HCT116 (cell line): ENCODE measurements at regions of chr4 and their contacts with region 1.

Region 1: GRCh38 chr4:185134307-185134869 is 8.7 kb upstream of the SLC25A4 start:
- DNase-seq: peak; percentile 59
- ATAC-seq: peak; percentile 85
- H3K4me3 ChIP-seq: no peak overlapping the region
- H3K27ac ChIP-seq: no peak overlapping the region
- H3K4me1 ChIP-seq: peaks cover 2 to 5% of the 10 kb centered on the region in 2 experiments; a peak in 1 of 4 replicates
- H3K27me3 ChIP-seq: no peaks in the 10 kb centered on the region
- CTCF ChIP-seq: peak; percentile 57 to 92 (median 89); a peak in 5 of 6 replicates
- POLR2A ChIP-seq: no peak
- RAD21 ChIP-seq: peak; percentile 96

Region 2: GRCh38 chr4:184745831-184746795 is 388.3 kb before region 1 on chr4:
- CTCF ChIA-PET with region 1: interaction called, 4 read pairs
- POLR2A ChIA-PET with region 1: no interaction called
- RAD21 ChIA-PET with region 1: no interaction called
- intact Hi-C with region 1: loop called (anchors 5 kb)
- DNase-seq: peak; percentile 29
- ATAC-seq: peak; percentile 79
- H3K4me3 ChIP-seq: no peak overlapping the region
- H3K27ac ChIP-seq: no peak overlapping the region
- H3K4me1 ChIP-seq: peaks cover 0 to 9% of the 10 kb centered on the region in 2 experiments; a peak in 1 of 4 replicates
- H3K27me3 ChIP-seq: no peaks in the 10 kb centered on the region
- CTCF ChIP-seq: peak; percentile 57 to 66 (median 57)
- POLR2A ChIP-seq: no peak
- RAD21 ChIP-seq: peak; percentile 80

Region 3: GRCh38 chr4:184825896-184826690 is 308.3 kb before region 1 on chr4 and contains the start of gene ACSL1:
- CTCF ChIA-PET with region 1: no interaction called
- POLR2A ChIA-PET with region 1: no interaction called
- RAD21 ChIA-PET with region 1: no interaction called
- intact Hi-C with region 1: loop called (anchors 5 kb)
- DNase-seq: no peak
- ATAC-seq: peak; percentile 91
- H3K4me3 ChIP-seq: peak within 1 kb of the TSS; percentile 45 to 67
- H3K27ac ChIP-seq: peak within 1 kb of the TSS; percentile 19; the same call in 1 of the 2 replicates
- H3K4me1 ChIP-seq: peaks cover 6 to 17% of the 10 kb centered on the region in 2 experiments
- H3K27me3 ChIP-seq: no peaks in the 10 kb centered on the region
- CTCF ChIP-seq: no peak
- POLR2A ChIP-seq: peak; percentile 44
- RAD21 ChIP-seq: no peak
- total RNA-seq, gene ACSL1: 12.5 TPM

Region 4: DNA sequence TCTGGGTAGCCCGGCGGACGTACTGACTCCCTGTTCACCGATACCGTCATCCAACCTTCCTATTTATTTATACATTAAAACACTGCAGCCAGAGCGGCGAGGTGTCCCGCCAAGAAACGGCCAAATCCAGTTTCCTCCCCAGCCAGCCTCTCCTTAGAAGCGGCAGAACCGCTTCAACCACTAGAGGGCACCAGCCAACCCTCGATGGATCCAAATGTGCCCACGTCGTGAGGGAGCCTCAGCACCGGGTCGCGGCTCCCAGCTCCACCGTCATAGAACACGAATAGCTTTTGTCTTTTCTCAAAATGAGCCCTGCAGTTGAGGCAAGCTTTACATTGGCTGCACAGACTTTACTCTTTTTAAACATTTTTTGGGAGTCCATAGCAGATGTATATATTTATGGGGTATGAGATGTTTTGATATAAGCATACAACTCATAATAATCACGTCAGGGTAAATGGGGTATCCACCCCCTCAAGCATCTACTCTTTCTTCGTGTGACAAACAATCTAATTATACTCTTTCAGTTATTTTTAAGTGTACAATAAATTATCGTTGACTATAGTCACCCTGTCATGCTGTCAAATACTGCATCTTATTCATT is 129.1 kb before region 1 on chr4:
- CTCF ChIA-PET with region 1: interaction called, 17 read pairs
- POLR2A ChIA-PET with region 1: no interaction called
- RAD21 ChIA-PET with region 1: interaction called, 4 to 5 read pairs
- intact Hi-C with region 1: loop called (anchors 1 kb)
- DNase-seq: peak; percentile 72
- ATAC-seq: peak; percentile 97
- H3K4me3 ChIP-seq: peak overlapping the region; percentile 13 to 38
- H3K27ac ChIP-seq: no peak overlapping the region
- H3K4me1 ChIP-seq: peaks cover 3 to 7% of the 10 kb centered on the region in 2 experiments; a peak in 2 of 4 replicates
- H3K27me3 ChIP-seq: no peaks in the 10 kb centered on the region
- CTCF ChIP-seq: peak; percentile 89 to 95 (median 93)
- POLR2A ChIP-seq: no peak
- RAD21 ChIP-seq: peak; percentile 95

Region 5: GRCh38 chr4:185039508-185040273 is 94.7 kb before region 1 on chr4:
- CTCF ChIA-PET with region 1: interaction called, 47 read pairs
- POLR2A ChIA-PET with region 1: interaction called, 5 read pairs
- RAD21 ChIA-PET with region 1: interaction called, 4 read pairs
- intact Hi-C with region 1: loop called (anchors 1 kb)
- DNase-seq: peak; percentile 62
- ATAC-seq: peak; percentile 95
- H3K4me3 ChIP-seq: peak overlapping the region in 1 of 2 experiments; percentile 39; a peak in 3 of 4 replicates
- H3K27ac ChIP-seq: no peak overlapping the region
- H3K4me1 ChIP-seq: peaks cover 0 to 7% of the 10 kb centered on the region in 2 experiments; a peak in 1 of 4 replicates
- H3K27me3 ChIP-seq: no peaks in the 10 kb centered on the region
- CTCF ChIP-seq: peak; percentile 79 to 92 (median 80)
- POLR2A ChIP-seq: no peak
- RAD21 ChIP-seq: peak; percentile 90

Region 6: GRCh38 chr4:185183619-185184281 is 49.4 kb after region 1 on chr4:
- CTCF ChIA-PET with region 1: interaction called, 7 read pairs
- POLR2A ChIA-PET with region 1: no interaction called
- RAD21 ChIA-PET with region 1: interaction called in 1 of 2 experiments, 3 read pairs
- intact Hi-C with region 1: loop called (anchors 1 kb)
- DNase-seq: peak; percentile 78
- ATAC-seq: peak; percentile 84
- H3K4me3 ChIP-seq: no peak overlapping the region
- H3K27ac ChIP-seq: no peak overlapping the region
- H3K4me1 ChIP-seq: no peaks in the 10 kb centered on the region
- H3K27me3 ChIP-seq: no peaks in the 10 kb centered on the region
- CTCF ChIP-seq: peak; percentile 66 to 81 (median 81); a peak in 5 of 6 replicates
- POLR2A ChIP-seq: no peak
- RAD21 ChIP-seq: peak; percentile 78

Region 7: DNA sequence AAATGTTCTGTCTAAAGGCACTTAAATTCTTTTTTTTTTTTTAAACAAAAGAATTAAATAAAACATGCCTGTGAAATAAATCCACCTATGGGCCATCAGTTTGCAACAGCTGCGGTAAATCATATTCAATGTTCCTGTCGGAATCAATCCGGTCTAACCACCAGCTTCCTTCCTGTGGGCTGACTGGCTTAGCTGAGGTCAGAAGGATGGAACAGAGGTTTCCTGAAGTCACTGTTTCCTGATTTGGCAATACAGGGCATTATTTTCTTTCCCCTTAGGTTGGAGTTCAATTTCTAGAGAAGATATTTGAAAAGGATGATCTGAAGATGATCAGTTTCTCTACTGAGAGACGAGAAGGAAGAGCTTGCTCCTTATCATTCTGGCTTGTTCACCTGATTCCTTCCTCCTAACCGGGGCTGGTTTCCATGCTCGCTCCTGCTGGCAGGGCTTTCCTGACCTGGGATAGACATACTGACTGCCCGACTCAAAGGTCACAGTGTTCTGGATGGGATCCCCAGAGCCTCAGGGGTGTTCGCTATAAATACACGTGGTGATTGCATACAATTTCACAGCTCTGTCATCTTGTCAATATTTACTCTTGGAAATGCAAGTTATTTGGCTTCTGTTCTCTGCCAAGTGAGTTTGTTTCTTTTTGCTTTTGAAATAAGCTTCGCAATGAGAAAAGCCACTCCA is 379.2 kb after region 1 on chr4:
- CTCF ChIA-PET with region 1: no interaction called
- POLR2A ChIA-PET with region 1: no interaction called
- RAD21 ChIA-PET with region 1: no interaction called
- intact Hi-C with region 1: no loop called
- DNase-seq: no peak
- ATAC-seq: no peak
- H3K4me3 ChIP-seq: no peak overlapping the region
- H3K27ac ChIP-seq: no peak overlapping the region
- H3K4me1 ChIP-seq: no peaks in the 10 kb centered on the region
- H3K27me3 ChIP-seq: no peaks in the 10 kb centered on the region
- CTCF ChIP-seq: no peak
- POLR2A ChIP-seq: no peak
- RAD21 ChIP-seq: no peak